Activated CD4-positive, alpha-beta memory T cell treated with anti-CD3 and anti-CD28 coated beads for 36 hours (primary cell): ENCODE measurements at regions of chr2 and their contacts with region 1.

Region 1: GRCh38 chr2:106582148-106583143 is 95.3 kb downstream of the CD8B2 start:
- DNase-seq: peak; percentile 71
- H3K4me3 Mint-ChIP-seq: peak overlapping the region; percentile 83
- H3K27ac Mint-ChIP-seq: no peak overlapping the region
- H3K4me1 Mint-ChIP-seq: peaks cover 14% of the 10 kb centered on the region
- H3K27me3 Mint-ChIP-seq: peaks cover 51% of the 10 kb centered on the region

Region 2: DNA sequence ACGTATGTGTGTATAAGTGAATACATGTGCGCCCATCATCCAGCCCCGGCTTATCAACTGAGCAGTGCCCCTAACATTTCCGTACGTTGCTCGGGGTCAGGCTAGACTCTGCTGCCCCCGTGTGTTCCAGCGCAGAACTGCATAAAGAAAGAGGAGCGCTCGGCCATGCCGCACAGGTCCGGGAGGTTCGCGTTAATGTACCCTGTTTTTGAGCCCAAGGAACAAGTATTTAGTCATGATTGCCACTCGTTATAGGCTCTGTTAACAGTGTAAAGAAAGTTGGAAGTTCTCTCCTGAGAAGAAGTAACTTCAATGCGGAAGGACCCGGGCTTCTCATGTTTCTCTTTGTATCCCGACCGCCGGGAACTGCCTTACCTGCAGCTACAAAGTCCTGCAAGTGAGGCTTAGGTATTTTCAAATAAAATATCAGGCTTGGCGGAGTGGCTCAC is 39.6 kb before region 1 on chr2:
- CTCF ChIA-PET with region 1: interaction called, 13 read pairs
- POLR2A ChIA-PET with region 1: no interaction called
- intact Hi-C with region 1: loop called (anchors 5 kb)
- DNase-seq: peak; percentile 84
- H3K4me3 Mint-ChIP-seq: peak overlapping the region; percentile 57
- H3K27ac Mint-ChIP-seq: no peak overlapping the region
- H3K4me1 Mint-ChIP-seq: no peaks in the 10 kb centered on the region
- H3K27me3 Mint-ChIP-seq: peaks cover 22% of the 10 kb centered on the region

Region 3: GRCh38 chr2:106566050-106566449 is 16.4 kb before region 1 on chr2:
- CTCF ChIA-PET with region 1: interaction called, 11 read pairs
- POLR2A ChIA-PET with region 1: no interaction called
- intact Hi-C with region 1: loop called (anchors 1 kb)
- DNase-seq: peak; percentile 73
- H3K4me3 Mint-ChIP-seq: no peak overlapping the region
- H3K27ac Mint-ChIP-seq: peak overlapping the region; percentile 59
- H3K4me1 Mint-ChIP-seq: peaks cover 15% of the 10 kb centered on the region
- H3K27me3 Mint-ChIP-seq: peaks cover 16% of the 10 kb centered on the region

Region 4: DNA sequence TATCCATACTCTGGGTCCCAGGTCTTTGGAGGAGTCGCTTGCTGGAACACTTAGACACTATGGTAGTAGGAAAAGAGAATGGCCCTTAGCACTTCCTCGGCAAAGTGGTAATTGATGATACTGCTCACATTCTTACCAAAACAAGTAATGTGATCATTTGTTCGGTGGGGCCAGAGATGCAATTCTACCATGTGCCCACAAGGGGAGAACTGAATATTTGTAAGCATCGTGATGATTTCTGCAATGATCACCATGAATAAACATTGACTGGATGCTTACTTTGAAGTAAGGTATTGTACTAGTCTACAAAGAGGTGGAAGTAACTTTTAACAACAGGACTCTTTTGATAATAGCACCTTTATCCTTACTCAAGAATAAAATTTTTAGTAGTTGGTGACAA is 14.4 kb after region 1 on chr2:
- CTCF ChIA-PET with region 1: interaction called, 18 read pairs
- POLR2A ChIA-PET with region 1: interaction called, 3 read pairs
- intact Hi-C with region 1: no loop called
- DNase-seq: no peak
- H3K4me3 Mint-ChIP-seq: no peak overlapping the region
- H3K27ac Mint-ChIP-seq: no peak overlapping the region
- H3K4me1 Mint-ChIP-seq: no peaks in the 10 kb centered on the region
- H3K27me3 Mint-ChIP-seq: peaks cover 13% of the 10 kb centered on the region

Region 5: DNA sequence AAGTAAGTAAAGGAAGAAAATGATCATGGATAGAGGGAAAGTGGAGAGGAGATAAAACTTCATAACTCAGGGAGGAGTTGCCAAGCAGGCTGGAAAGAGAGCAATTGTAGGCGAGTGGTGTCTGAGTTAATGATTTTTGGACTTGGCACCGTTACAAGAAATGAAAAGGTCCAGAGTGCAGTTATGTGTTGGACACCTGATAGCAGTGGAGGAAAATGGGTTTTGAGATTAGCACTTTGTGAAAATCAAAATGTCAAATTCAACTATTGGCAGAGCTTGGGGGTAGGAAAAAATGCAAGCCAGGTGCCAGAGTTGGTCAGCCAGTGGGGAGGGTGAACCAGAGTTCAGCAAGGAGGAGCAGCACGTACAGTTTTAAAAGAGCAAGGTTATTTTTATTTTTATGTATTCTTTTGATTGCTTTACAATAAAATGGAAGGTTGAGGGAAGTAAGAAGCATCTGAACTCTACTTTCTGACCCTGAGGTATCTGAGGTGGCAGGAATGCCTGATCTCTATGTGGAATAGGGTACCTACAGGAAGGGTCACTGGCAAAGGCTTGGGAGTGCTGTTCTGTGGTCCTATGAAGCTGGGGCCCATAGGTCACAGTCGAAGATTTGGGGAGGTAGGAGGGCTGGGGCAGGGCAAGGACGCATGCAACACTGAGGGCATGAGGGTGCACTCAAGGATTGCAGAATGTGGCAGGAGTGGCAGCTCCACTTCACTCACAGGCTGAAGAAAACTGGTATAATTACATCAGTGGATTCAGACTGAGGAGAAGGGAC is 32.3 kb after region 1 on chr2:
- CTCF ChIA-PET with region 1: no interaction called
- POLR2A ChIA-PET with region 1: no interaction called
- intact Hi-C with region 1: no loop called
- DNase-seq: no peak
- H3K4me3 Mint-ChIP-seq: no peak overlapping the region
- H3K27ac Mint-ChIP-seq: no peak overlapping the region
- H3K4me1 Mint-ChIP-seq: no peaks in the 10 kb centered on the region
- H3K27me3 Mint-ChIP-seq: peaks cover 14% of the 10 kb centered on the region

Region 6: GRCh38 chr2:106868275-106868674 is 285.8 kb after region 1 on chr2:
- CTCF ChIA-PET with region 1: no interaction called
- POLR2A ChIA-PET with region 1: no interaction called
- intact Hi-C with region 1: no loop called
- DNase-seq: no peak
- H3K4me3 Mint-ChIP-seq: no peak overlapping the region
- H3K27ac Mint-ChIP-seq: no peak overlapping the region
- H3K4me1 Mint-ChIP-seq: no peaks in the 10 kb centered on the region
- H3K27me3 Mint-ChIP-seq: no peaks in the 10 kb centered on the region